Activated naive CD4-positive, alpha-beta T cell treated with anti-CD3 and anti-CD28 coated beads for 36 hours (primary cell): ENCODE measurements at regions of chr4 and their contacts with region 1.

Region 1: DNA sequence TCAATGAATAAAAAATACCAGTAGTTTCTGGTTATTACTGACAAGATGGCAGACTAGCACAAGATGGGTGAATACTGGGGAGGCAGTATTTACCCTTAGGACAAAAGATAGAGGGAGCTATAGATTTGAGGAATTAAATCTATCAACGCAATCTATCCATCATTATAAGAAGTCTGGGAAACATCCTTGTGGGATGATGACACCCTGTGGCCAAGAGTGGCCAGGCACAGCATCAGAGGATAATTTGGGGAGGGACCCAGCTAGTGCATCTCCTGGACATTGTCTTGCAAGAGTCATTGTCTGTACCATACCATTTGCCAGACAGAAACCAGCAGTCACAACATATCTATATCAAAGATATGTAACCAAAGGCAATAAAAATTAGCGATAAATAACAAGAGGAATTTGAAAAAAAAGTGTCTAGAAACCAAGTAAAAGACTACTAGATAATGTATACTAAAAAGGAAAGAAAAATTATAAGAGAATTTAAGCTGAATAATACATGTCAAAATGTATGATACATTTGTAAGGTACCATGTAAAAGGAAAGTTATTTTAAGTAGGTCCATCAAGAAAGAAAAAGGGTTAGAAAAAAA is 22.9 kb downstream of the KCTD8 start:
- DNase-seq: no peak
- H3K4me3 Mint-ChIP-seq: no peak overlapping the region
- H3K27ac Mint-ChIP-seq: no peak overlapping the region
- H3K4me1 Mint-ChIP-seq: no peaks in the 10 kb centered on the region
- H3K27me3 Mint-ChIP-seq: no peaks in the 10 kb centered on the region

Region 2: DNA sequence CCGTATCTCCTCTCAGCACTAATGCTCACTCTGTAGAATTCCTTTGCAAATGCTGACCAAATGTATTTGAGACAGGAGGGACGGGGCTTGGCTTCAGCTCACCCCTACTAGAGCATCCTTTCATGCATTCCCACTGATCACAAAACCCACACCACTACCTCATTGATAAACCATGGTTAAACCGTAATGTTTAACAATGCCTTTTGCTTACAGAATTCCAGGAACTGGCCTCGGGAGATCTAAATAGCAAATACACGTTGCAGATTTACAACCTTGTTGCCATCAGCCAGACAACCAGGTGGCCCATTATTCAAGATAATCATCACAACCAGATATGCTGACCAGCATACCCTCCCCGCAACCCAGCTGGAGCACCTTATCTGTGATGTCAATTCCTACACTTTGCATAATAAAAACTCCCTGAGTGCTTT is 369.0 kb before region 1 on chr4:
- CTCF ChIA-PET with region 1: no interaction called
- intact Hi-C with region 1: loop called (anchors 10 kb)
- DNase-seq: no peak
- H3K4me3 Mint-ChIP-seq: no peak overlapping the region
- H3K27ac Mint-ChIP-seq: no peak overlapping the region
- H3K4me1 Mint-ChIP-seq: no peaks in the 10 kb centered on the region
- H3K27me3 Mint-ChIP-seq: no peaks in the 10 kb centered on the region